ENCODE measurements at regions of chr2 and their contacts with region 1.

Region 1: DNA sequence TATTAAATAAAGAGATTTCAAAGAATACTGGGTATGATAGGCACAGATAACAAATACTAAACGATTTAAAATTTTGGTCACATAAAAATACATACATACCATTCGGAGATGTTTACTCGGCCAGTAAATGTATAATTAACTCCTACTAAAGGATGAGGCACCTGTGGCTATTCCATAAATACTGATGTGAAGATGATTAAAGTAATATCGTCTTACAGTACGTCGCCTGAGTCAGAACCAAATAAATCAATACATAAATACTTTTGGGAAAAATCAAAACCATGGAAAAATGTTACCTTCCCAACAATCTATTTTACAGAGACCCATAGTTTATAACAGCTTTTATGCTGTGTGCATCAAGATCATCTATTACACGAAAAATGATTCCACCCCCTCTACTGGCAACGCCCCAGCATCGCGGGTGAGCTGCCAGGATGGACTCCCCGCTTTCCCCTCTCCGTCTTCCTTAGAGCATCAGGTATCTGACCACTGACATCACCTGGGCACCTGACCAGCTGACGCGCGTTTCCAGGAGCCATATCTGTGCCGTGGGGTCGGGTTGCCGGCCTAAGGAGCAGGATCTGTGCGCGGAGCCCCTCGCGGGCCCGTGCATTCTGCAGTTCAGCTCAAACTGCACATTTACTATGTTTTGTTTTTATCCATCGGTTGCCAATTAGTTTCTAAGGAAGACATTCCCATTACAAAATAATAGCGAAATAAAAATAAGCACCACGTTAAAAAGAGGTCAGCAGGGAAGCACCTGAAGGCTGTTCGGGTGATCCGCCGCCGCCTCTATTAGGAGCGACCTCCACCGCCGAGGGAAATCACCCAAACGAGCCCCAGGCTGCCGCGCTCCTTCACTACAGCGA is 901 bp downstream of the ICA1L start:
- DNase-seq: peak; percentile 88
- H3K4me3 ChIP-seq: peak overlapping the region; percentile 53 to 57 (median 55)
- H3K27ac ChIP-seq: peak overlapping the region; percentile 77 to 91 (median 83)
- H3K4me1 ChIP-seq: no peaks in the 10 kb centered on the region
- H3K27me3 ChIP-seq: no peaks in the 10 kb centered on the region
- CTCF ChIP-seq: peak in 3 of 6 experiments; percentile 25 to 30 (median 29)
- POLR2A ChIP-seq: peak in 1 of 2 donors; percentile 67

Region 2: DNA sequence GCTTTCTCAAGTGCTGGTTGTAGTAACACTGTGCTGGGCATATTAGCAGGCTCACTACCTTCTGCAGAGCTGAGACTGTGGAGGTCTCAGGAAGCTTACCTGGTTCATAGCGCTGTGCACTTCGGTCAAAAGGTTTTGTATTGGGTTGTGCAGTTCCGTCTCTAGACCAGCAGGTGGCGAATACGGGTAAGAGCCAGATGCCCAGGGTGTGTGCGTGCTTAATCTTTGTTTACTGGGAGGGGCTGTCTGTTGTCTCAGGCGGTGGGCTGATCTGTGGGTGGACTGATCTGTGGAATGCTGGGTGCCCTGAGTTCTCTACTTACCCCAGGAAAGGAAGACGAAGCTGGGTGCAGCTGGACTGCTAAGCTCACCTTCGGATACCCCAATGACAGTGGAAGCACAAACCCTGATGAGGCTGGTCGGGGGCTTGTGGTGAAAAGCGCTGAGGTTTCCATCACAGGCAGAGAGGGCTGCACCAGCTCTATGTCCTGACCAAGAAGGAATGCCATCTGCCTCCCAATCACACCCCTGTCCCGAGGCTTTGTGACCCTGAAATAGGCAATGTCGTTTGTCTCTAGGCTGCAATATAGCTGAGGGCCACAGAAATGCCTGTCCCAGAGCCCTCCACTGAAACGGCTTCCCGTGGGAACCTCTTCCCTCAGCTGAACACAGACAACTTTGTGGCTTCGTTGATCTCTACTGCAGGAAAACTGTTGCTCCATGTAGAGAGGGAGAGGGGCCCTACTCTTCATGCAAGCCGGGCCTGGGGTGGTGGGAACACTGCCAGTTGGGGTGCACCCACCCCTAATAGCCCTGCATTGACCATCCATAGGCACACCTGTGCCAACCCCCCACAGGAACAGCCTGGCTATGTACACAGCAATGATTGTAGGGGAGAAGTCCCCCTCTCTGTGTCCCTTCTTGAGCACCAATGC is 281.8 kb before region 1 on chr2:
- intact Hi-C with region 1: loop called (anchors 5 kb)
- DNase-seq: peak; percentile 70 to 74
- H3K4me3 ChIP-seq: no peak overlapping the region
- H3K27ac ChIP-seq: no peak overlapping the region
- H3K4me1 ChIP-seq: peaks cover 0 to 8% of the 10 kb centered on the region in 2 donors
- H3K27me3 ChIP-seq: no peaks in the 10 kb centered on the region
- CTCF ChIP-seq: peak; percentile 71 to 92 (median 84)
- POLR2A ChIP-seq: no peak

Measured in thyroid gland (tissue), 4 donors.